Posterior vena cava (tissue), 2 donors: ENCODE measurements at regions of chr15 and their contacts with region 1.

Region 1: GRCh38 chr15:90954712-90955671 is at the start of gene RCCD1:
- DNase-seq: peak; percentile 98
- total RNA-seq, gene RCCD1: 5.1 to 7.4 TPM

Region 2: DNA sequence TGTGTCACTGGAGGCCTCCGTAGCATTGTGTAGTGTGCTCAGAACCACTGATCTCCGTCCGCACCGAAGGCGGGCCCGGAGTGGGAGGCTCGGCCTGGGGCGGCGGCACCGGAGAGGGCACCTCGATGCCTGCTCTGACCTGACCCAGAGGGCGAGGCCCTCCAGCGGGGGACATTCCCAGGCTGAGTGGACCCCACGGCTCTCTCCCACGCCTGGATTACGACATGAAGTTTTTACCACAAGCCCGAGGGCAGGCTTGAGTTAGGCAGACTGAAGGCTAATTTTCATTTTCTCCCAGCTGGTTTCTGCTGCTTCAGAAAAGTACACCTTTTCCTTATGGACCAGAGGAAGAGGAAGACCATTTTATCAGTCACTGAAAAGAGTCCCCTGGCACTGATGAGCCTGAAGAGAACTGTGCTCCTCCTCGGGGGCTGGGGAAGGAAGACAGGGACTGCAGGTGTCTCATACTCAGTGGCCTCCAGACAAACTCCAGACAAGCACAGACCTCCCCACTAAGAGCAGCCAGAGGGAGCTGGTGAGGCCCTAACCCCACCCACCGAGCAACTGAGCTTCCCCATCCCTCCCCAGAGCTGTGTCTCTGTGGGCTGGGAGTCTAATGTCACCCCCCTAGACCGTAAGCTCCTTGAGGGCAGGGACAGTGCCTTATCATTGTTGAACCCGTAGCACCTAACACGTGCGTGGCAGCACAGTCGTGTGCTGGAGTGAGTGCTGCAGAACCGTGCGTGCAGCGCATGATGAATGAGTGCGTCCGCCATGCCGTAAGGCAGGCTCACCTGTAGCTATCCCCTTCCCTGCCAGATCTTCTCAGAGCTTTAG is 312.3 kb before region 1 on chr15:
- intact Hi-C with region 1: no loop called
- DNase-seq: peak; percentile 78

Region 3: GRCh38 chr15:90902040-90902839 is 52.8 kb before region 1 on chr15:
- intact Hi-C with region 1: no loop called
- DNase-seq: peak; percentile 92

Region 4: DNA sequence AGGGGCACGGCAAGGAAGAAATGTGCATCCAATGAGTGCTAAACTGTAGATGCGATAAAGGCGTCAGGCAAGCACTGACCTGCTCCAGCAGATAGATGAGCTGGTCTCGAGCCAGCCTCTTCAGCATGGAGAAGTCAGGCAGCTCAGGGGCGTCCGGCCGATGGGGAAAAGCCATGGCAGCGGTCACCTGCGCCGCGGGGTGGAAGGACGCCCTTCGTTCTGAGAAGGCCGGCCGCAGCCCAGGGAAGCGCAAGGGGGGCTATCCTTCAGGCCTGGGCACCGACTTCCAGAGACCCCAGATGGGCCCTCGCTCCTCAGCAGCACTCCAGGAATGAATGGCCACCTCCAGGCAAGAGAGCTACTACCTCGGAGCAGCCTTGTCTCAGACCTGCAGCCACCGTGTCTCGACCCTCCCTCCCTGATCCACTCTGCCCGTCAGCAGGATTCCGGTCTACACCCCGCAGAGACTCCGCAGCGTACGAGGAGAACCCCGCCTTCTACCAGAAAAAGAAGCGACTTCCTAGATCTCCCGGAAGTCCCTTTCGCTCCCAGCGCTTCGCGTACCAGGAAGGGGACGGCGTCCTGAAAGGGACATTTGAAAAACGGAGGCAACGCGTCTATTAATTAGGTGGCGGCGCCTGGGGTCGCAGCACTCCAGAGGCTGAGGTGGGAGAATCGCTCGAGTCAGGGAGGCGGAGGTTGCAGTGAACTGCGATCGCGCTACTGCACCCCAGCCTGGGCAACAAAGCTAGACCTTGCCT is 67.3 kb after region 1 on chr15 and contains the start of gene VPS33B:
- intact Hi-C with region 1: no loop called
- DNase-seq: peak; percentile 92
- total RNA-seq, gene VPS33B: 10.1 to 14.3 TPM

Region 5: GRCh38 chr15:91039996-91040395 is 85.0 kb after region 1 on chr15:
- intact Hi-C with region 1: loop called in 1 of 2 experiments (anchors 5 kb)
- DNase-seq: no peak

Region 6: GRCh38 chr15:91271565-91272153 is 316.7 kb after region 1 on chr15:
- intact Hi-C with region 1: loop called in 1 of 2 experiments (anchors 5 kb)
- DNase-seq: no peak